Naive thymus-derived CD4-positive, alpha-beta T cell (primary cell): ENCODE measurements at regions of chr13 and their contacts with region 1.

Region 1: DNA sequence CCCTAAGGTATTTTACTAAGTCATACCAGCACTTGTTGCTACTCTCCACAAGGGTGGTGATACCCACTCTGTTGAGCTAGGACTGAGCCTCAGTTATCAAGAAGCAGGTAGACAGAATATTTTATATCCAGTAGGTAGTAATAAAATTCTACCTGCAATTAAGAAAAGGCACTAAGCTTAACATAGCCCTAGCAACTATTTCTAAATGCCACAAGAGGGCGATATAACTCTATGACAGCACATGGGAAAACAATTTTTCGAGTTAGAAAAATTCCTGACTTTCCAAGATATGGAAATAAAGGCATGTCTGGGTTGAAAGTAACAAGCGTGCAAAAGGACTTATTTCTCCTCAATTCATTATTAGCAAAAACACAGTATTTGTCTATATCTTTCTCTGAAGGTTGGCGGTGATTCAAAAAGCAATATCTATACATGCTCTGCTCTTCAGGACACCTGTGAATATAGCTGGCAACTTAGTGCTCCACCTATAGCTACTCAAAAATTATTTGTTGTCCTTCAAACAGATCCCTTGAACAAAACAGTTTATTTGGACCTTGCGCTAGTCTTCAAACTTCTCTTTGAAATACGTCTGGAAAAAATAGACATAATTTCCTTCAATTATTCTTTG is 14.7 kb downstream of the CCDC169 start:
- DNase-seq: peak in 4 of 9 donors; percentile 4 to 18 (median 10)
- ATAC-seq: peak; percentile 52
- H3K4me3 ChIP-seq: no peak overlapping the region
- H3K4me3 Mint-ChIP-seq: no peak overlapping the region
- H3K27ac ChIP-seq: no peak overlapping the region
- H3K27ac Mint-ChIP-seq: no peak overlapping the region
- H3K4me1 ChIP-seq: no peaks in the 10 kb centered on the region
- H3K4me1 Mint-ChIP-seq: no peaks in the 10 kb centered on the region
- H3K27me3 ChIP-seq: peaks cover 0 to 5% of the 10 kb centered on the region in 2 donors
- H3K27me3 Mint-ChIP-seq: peaks cover 6 to 41% (median 32%) of the 10 kb centered on the region in 5 donors

Region 2: DNA sequence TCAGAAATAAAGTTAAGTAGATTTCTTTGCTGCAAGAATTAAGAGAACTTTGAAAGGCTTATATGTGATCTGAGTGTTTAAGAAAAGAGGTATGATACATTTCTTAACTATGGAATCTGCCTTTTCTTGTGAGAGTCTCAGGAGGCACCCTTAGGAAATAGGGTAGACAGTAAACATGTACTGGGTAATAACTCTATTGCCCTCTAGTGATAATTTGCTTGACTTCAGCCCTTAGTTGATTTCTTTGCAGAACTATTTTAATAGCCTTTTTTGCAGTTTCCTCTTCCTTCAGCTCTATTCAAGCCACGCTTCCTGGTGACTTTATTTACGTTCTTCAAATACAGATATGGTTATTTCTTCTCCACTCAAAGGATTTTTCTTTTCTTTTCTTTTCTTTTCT is 112.3 kb after region 1 on chr13:
- CTCF ChIA-PET with region 1: no interaction called
- POLR2A ChIA-PET with region 1: no interaction called
- intact Hi-C with region 1: loop called in 1 of 2 experiments (anchors 1 kb)
- DNase-seq: no peak
- ATAC-seq: peak; percentile 46
- H3K4me3 ChIP-seq: no peak overlapping the region
- H3K4me3 Mint-ChIP-seq: no peak overlapping the region
- H3K27ac ChIP-seq: no peak overlapping the region
- H3K27ac Mint-ChIP-seq: no peak overlapping the region
- H3K4me1 ChIP-seq: no peaks in the 10 kb centered on the region
- H3K4me1 Mint-ChIP-seq: peaks cover 0 to 2% (median 0%) of the 10 kb centered on the region in 7 donors
- H3K27me3 ChIP-seq: no peaks in the 10 kb centered on the region
- H3K27me3 Mint-ChIP-seq: peaks cover 0 to 24% (median 5%) of the 10 kb centered on the region in 5 donors

Region 3: GRCh38 chr13:36736119-36736726 is 453.3 kb after region 1 on chr13:
- CTCF ChIA-PET with region 1: interaction called, 6 read pairs
- POLR2A ChIA-PET with region 1: no interaction called
- intact Hi-C with region 1: loop called in 1 of 2 experiments (anchors 1 kb)
- DNase-seq: peak in 7 of 9 donors; percentile 3 to 43 (median 22)
- ATAC-seq: no peak
- H3K4me3 ChIP-seq: no peak overlapping the region
- H3K4me3 Mint-ChIP-seq: no peak overlapping the region
- H3K27ac ChIP-seq: no peak overlapping the region
- H3K27ac Mint-ChIP-seq: no peak overlapping the region
- H3K4me1 ChIP-seq: no peaks in the 10 kb centered on the region
- H3K4me1 Mint-ChIP-seq: no peaks in the 10 kb centered on the region
- H3K27me3 ChIP-seq: no peaks in the 10 kb centered on the region
- H3K27me3 Mint-ChIP-seq: peaks cover 0 to 4% (median 0%) of the 10 kb centered on the region in 5 donors

Region 4: DNA sequence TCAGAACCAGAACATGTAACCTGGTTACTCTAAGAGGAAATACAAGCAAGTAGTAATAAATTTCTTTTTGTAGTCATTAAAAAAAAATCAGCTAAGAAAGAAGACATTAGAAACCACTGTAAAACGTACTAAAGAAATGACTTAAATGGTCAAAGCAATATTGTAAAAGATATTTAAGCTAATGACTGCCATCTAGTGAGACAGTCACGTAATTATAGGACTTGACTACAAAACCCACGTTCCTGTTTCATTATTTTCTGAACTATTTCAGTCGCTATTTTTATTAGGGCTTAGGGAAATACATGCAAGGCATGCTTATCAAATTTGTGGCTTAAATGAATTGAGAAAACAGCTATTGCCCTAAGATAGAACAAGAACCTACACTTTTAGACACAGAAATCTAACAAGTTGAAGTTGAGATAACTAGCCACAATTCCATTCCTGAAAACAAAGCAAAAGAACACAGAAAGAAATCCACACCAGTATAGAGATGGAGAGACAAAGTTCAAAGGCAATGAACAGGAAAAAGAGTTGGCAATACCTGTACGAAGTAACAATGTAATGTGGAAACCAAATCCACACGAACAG is 698.3 kb after region 1 on chr13:
- CTCF ChIA-PET with region 1: no interaction called
- POLR2A ChIA-PET with region 1: no interaction called
- intact Hi-C with region 1: loop called in 1 of 2 experiments (anchors 2 kb)
- DNase-seq: peak in 3 of 9 donors; percentile 2 to 18 (median 5)
- ATAC-seq: peak; percentile 49
- H3K4me3 ChIP-seq: no peak overlapping the region
- H3K4me3 Mint-ChIP-seq: no peak overlapping the region
- H3K27ac ChIP-seq: no peak overlapping the region
- H3K27ac Mint-ChIP-seq: peak overlapping the region in 1 of 9 donors; percentile 10
- H3K4me1 ChIP-seq: no peaks in the 10 kb centered on the region
- H3K4me1 Mint-ChIP-seq: peaks cover 0 to 15% (median 2%) of the 10 kb centered on the region in 7 donors
- H3K27me3 ChIP-seq: no peaks in the 10 kb centered on the region
- H3K27me3 Mint-ChIP-seq: no peaks in the 10 kb centered on the region